MCF 10A (cell line): ENCODE measurements at regions of chr5 and their contacts with region 1.

Region 1: GRCh38 chr5:31638748-31639418 is at the start of gene PDZD2:
- DNase-seq: peak; percentile 69
- H3K4me3 Mint-ChIP-seq: peak within 1 kb of the TSS; percentile 77
- H3K27ac Mint-ChIP-seq: no peak within 1 kb of the TSS
- H3K4me1 Mint-ChIP-seq: peaks cover 6% of the 10 kb centered on the region
- H3K27me3 Mint-ChIP-seq: no peaks in the 10 kb centered on the region
- CTCF ChIP-seq: peak; percentile 4
- total RNA-seq, gene PDZD2: 22.6 and 23.0 TPM in 2 replicates

Region 2: GRCh38 chr5:31626156-31626555 is 12.7 kb before region 1 on chr5:
- CTCF ChIA-PET with region 1: interaction called, 19 read pairs
- POLR2A ChIA-PET with region 1: interaction called, 4 read pairs
- intact Hi-C with region 1: no loop called
- DNase-seq: peak; percentile 80
- H3K4me3 Mint-ChIP-seq: no peak overlapping the region
- H3K27ac Mint-ChIP-seq: no peak overlapping the region
- H3K4me1 Mint-ChIP-seq: peaks cover 14% of the 10 kb centered on the region
- H3K27me3 Mint-ChIP-seq: peaks cover 29% of the 10 kb centered on the region
- CTCF ChIP-seq: no peak

Region 3: DNA sequence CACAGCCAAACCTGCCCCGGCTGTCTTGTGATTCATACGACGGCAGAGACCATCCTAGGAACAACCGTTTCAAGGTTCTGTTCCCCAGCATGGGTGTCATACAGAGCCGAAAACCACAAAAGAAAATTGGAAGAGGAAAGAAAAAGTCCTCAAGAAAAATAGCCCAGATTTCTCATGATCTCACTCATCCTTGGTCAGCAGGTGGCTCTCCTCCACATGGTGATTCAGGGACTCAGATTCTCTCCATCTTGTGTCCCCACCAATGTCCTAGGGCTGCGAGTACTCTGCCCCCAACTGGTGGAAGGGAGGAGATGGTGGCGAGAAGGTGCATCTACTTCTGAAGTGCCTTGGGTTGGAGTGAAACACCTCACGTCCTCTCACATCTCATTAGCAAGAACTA is 25.7 kb after region 1 on chr5:
- CTCF ChIA-PET with region 1: interaction called, 13 read pairs
- POLR2A ChIA-PET with region 1: no interaction called
- intact Hi-C with region 1: no loop called
- DNase-seq: peak; percentile 59
- H3K4me3 Mint-ChIP-seq: no peak overlapping the region
- H3K27ac Mint-ChIP-seq: no peak overlapping the region
- H3K4me1 Mint-ChIP-seq: no peaks in the 10 kb centered on the region
- H3K27me3 Mint-ChIP-seq: peaks cover 25% of the 10 kb centered on the region
- CTCF ChIP-seq: no peak

Region 4: GRCh38 chr5:32369542-32370155 is 730.8 kb after region 1 on chr5:
- CTCF ChIA-PET with region 1: no interaction called
- POLR2A ChIA-PET with region 1: no interaction called
- intact Hi-C with region 1: no loop called
- DNase-seq: no peak
- H3K4me3 Mint-ChIP-seq: no peak overlapping the region
- H3K27ac Mint-ChIP-seq: no peak overlapping the region
- H3K4me1 Mint-ChIP-seq: peaks cover 12% of the 10 kb centered on the region
- H3K27me3 Mint-ChIP-seq: no peaks in the 10 kb centered on the region
- CTCF ChIP-seq: no peak